T-cell (primary cell): ENCODE measurements at regions of chrX and their contacts with region 1.

Region 1: GRCh38 chrX:66731398-66731797 is 92.5 kb upstream of the EDA2R start:
- DNase-seq: peak in 1 of 35 experiments; percentile 44
- ATAC-seq: peak in 1 of 4 experiments; percentile 20
- H3K4me3 ChIP-seq: no peak overlapping the region
- H3K4me3 Mint-ChIP-seq: no peak overlapping the region
- H3K27ac ChIP-seq: no peak overlapping the region
- H3K27ac Mint-ChIP-seq: no peak overlapping the region
- H3K4me1 ChIP-seq: no peaks in the 10 kb centered on the region
- H3K4me1 Mint-ChIP-seq: peaks cover 4 to 6% (median 5%) of the 10 kb centered on the region in 3 donors
- H3K27me3 ChIP-seq: no peaks in the 10 kb centered on the region
- H3K27me3 Mint-ChIP-seq: peaks cover 0 to 15% of the 10 kb centered on the region in 2 donors

Region 2: GRCh38 chrX:65581661-65582339 is 1149.6 kb before region 1 on chrX:
- CTCF ChIA-PET with region 1: interaction called, 8 to 12 read pairs
- POLR2A ChIA-PET with region 1: no interaction called
- DNase-seq: peak in 33 of 35 experiments; percentile 15 to 78 (median 42)
- ATAC-seq: peak in 2 of 4 experiments; percentile 78 to 82
- H3K4me3 ChIP-seq: no peak overlapping the region
- H3K4me3 Mint-ChIP-seq: no peak overlapping the region
- H3K27ac ChIP-seq: no peak overlapping the region
- H3K27ac Mint-ChIP-seq: no peak overlapping the region
- H3K4me1 ChIP-seq: peaks cover 0 to 7% of the 10 kb centered on the region in 2 experiments
- H3K4me1 Mint-ChIP-seq: peaks cover 6 to 8% (median 6%) of the 10 kb centered on the region in 3 donors
- H3K27me3 ChIP-seq: no peaks in the 10 kb centered on the region
- H3K27me3 Mint-ChIP-seq: peaks cover 0 to 22% of the 10 kb centered on the region in 2 donors

Region 3: GRCh38 chrX:65783746-65784145 is 947.7 kb before region 1 on chrX:
- CTCF ChIA-PET with region 1: no interaction called
- POLR2A ChIA-PET with region 1: no interaction called
- DNase-seq: no peak
- ATAC-seq: no peak
- H3K4me3 ChIP-seq: no peak overlapping the region
- H3K4me3 Mint-ChIP-seq: no peak overlapping the region
- H3K27ac ChIP-seq: no peak overlapping the region
- H3K27ac Mint-ChIP-seq: no peak overlapping the region
- H3K4me1 ChIP-seq: peaks cover 0 to 3% of the 10 kb centered on the region in 2 experiments
- H3K4me1 Mint-ChIP-seq: peaks cover 8 to 14% (median 11%) of the 10 kb centered on the region in 3 donors
- H3K27me3 ChIP-seq: no peaks in the 10 kb centered on the region
- H3K27me3 Mint-ChIP-seq: peaks cover 0 to 9% of the 10 kb centered on the region in 2 donors

Region 4: GRCh38 chrX:66634272-66634671 is 97.1 kb before region 1 on chrX:
- CTCF ChIA-PET with region 1: no interaction called
- POLR2A ChIA-PET with region 1: no interaction called
- DNase-seq: no peak
- ATAC-seq: no peak
- H3K4me3 ChIP-seq: no peak overlapping the region
- H3K4me3 Mint-ChIP-seq: no peak overlapping the region
- H3K27ac ChIP-seq: no peak overlapping the region
- H3K27ac Mint-ChIP-seq: no peak overlapping the region
- H3K4me1 ChIP-seq: peaks cover 0 to 5% of the 10 kb centered on the region in 2 experiments
- H3K4me1 Mint-ChIP-seq: peaks cover 1 to 7% (median 4%) of the 10 kb centered on the region in 3 donors
- H3K27me3 ChIP-seq: peaks cover 0 to 5% of the 10 kb centered on the region in 2 experiments
- H3K27me3 Mint-ChIP-seq: peaks cover 0 to 13% of the 10 kb centered on the region in 2 donors

Region 5: DNA sequence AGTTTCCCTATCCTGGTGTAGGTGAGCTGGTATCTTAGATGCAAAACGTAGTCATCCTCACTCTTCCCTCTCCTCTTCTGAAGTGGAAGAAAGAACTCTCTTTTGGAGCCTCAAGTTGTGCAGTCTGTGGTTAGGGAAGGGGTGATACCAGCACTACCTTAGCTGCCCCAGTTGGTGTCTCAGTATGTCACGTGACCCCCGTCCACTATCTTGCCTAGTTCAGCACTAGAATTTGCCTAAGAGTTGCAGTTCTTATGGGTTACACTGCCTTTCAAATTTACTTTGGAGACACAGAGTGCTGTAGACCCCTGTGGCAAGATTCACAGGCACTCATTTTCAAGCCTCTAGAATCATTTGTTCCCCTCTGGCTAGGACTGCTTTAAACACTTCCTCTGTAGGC is 230.3 kb after region 1 on chrX:
- CTCF ChIA-PET with region 1: no interaction called
- POLR2A ChIA-PET with region 1: no interaction called
- DNase-seq: no peak
- ATAC-seq: no peak
- H3K4me3 ChIP-seq: no peak overlapping the region
- H3K4me3 Mint-ChIP-seq: no peak overlapping the region
- H3K27ac ChIP-seq: no peak overlapping the region
- H3K27ac Mint-ChIP-seq: no peak overlapping the region
- H3K4me1 ChIP-seq: no peaks in the 10 kb centered on the region
- H3K4me1 Mint-ChIP-seq: no peaks in the 10 kb centered on the region
- H3K27me3 ChIP-seq: no peaks in the 10 kb centered on the region
- H3K27me3 Mint-ChIP-seq: peaks cover 0 to 11% of the 10 kb centered on the region in 2 donors

Region 6: DNA sequence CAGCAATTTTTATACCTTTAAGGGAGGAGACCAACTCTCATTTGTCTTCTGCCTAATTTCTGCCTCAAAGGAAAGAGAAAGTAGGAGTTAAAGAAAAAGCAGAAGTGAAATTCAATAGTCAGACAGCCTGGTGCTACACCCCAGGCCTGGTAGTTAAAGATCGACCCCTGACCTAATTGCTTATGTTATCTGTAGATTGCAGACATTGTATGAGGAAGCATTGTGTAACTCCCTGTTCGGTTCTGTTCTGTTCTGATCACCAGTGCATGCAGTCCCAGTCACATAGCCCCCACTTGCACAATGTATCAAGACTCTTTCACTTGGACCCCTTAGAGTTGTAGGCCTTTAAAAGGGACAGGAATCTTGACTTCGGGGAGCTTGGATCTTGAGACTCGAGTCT is 476.5 kb after region 1 on chrX:
- CTCF ChIA-PET with region 1: no interaction called
- POLR2A ChIA-PET with region 1: no interaction called
- DNase-seq: no peak
- ATAC-seq: no peak
- H3K4me3 ChIP-seq: no peak overlapping the region
- H3K4me3 Mint-ChIP-seq: no peak overlapping the region
- H3K27ac ChIP-seq: no peak overlapping the region
- H3K27ac Mint-ChIP-seq: no peak overlapping the region
- H3K4me1 ChIP-seq: no peaks in the 10 kb centered on the region
- H3K4me1 Mint-ChIP-seq: no peaks in the 10 kb centered on the region
- H3K27me3 ChIP-seq: no peaks in the 10 kb centered on the region
- H3K27me3 Mint-ChIP-seq: peaks cover 0 to 6% of the 10 kb centered on the region in 2 donors